ENCODE measurements at regions of chr3 and their contacts with region 1.

Region 1: DNA sequence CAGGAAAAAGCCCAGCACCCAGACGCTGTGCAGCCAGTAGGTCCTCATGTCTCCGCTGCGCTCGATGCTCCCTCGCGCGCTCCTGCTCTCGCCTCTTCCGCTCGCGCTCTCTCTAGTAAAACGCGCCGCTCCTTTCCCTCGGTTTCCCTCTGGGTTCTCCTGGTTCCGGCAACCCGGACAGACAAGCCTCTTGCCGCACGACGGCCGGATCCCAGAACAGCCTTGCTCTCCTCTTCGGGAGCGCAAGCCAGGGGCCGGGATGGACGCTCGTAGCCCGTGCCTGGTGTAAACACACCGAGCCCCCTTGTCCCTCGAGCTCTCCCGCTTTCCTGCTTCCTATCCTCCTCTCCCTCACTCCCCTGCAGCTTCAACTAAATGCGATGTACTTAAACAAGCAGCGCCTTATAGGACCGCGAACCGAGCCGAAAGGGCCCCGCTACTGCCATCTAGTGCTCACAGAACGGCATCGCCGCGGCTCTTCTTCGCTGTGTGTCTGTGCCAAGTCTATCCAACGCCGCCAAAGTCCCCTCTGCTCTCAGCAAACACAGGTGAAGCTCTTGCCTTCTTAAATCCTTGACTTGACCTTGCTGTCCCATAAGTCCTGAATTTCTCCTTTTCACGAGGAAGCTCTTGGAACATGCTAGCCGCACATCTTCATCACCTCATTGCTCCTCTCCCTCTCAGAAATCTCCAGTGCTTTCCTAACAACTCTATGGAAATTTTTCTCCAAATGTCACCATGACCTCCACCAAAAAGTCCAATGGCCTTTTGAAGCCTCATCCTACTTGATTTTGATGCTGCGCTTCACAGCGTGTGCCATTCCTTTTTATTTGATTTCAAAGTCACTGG is 1037.2 kb downstream of the IGSF11 start:
- DNase-seq: peak; percentile 70
- ATAC-seq: peak; percentile 84
- H3K4me3 Mint-ChIP-seq: no peak overlapping the region
- H3K27ac Mint-ChIP-seq: no peak overlapping the region
- H3K4me1 Mint-ChIP-seq: no peaks in the 10 kb centered on the region
- H3K27me3 Mint-ChIP-seq: peaks cover 5% of the 10 kb centered on the region
- CTCF ChIP-seq: peak; percentile 71

Region 2: DNA sequence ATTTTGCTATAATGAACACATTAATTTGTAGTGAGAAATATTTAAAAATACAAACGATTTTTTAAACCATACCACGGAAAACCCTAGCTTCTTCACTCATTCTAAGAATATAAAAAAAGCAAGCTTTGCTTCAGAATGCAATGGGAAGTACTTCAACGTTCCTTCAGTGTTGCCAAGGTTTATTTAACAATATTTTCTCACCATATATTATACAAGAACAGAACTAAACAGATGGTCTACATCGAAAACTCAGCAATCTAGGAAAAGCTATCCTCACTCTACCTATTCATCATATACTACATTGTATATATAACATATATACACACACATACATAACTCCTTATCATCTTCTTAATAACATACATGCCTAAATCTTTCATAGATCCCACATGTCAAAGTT is 10.2 kb before region 1 on chr3:
- CTCF ChIA-PET with region 1: interaction called, 22 read pairs
- POLR2A ChIA-PET with region 1: no interaction called
- intact Hi-C with region 1: no loop called
- DNase-seq: no peak
- ATAC-seq: no peak
- H3K4me3 Mint-ChIP-seq: no peak overlapping the region
- H3K27ac Mint-ChIP-seq: no peak overlapping the region
- H3K4me1 Mint-ChIP-seq: no peaks in the 10 kb centered on the region
- H3K27me3 Mint-ChIP-seq: no peaks in the 10 kb centered on the region
- CTCF ChIP-seq: no peak

Measured in activated CD8-positive, alpha-beta T cell treated with anti-CD3 and anti-CD28 coated beads for 36 hours (primary cell).